AG04449 (cell line): ENCODE measurements at regions of chr9 and their contacts with region 1.

Region 1: DNA sequence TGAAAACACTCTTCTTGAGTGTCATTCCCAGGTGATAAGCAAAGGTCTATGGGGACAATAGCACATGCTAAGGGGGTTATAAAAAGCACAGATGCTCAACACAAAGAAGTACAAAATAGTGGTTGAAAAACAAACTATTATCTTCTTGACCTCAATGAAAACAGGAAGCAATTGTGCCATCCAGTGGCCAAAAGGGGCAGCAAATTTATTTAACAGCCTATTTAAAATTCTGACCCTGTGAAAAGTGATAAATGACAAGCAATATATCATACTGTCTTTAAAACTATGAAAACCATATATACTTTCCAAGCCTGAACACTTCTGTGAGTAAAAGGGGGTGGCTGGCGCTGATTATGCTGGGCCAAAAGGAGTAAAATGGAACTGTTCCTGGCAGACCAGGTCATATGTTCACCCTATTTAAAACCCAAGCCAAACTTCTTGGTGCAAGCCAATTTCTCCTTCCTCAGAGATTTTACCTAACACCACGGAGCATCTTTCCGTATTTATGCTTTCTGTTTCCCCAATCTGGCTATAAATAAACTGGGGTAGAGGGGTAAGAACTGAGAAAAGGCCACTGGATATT is 29.7 kb downstream of the TEX10 start:
- DNase-seq: no peak
- H3K4me3 ChIP-seq: no peak overlapping the region
- CTCF ChIP-seq: peak; percentile 39

Region 2: DNA sequence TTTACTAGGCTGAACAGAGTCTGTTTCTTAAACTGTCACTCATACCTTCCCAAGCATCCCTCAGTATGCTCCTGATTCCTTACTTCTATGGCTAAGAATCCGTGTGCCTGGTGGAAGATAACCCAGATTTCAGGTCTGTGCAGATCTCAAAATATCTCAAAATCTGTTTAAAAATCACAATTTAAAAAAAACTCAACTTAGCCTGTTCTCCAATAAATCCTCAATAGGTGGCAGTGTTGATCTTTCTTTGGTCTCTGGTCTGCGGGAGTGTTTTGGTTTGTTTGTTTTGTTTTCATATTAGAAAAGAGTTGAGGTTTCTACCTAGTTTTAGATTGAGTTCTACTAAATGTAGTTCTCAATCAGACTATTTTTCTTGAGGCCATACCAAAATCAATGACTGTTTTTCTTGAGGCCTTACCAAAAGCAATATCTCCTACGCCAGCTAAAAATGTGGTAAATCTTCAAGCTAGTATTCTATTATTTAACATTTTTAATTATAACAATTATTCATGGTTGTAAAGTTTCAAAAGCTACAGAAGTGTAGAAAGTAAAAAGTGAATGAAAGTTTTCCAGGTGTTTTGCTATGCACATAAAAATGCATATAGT is 1160.2 kb before region 1 on chr9:
- CTCF ChIA-PET with region 1: interaction called, 24 read pairs
- POLR2A ChIA-PET with region 1: no interaction called
- DNase-seq: no peak
- H3K4me3 ChIP-seq: no peak overlapping the region
- CTCF ChIP-seq: peak; percentile 44

Region 3: GRCh38 chr9:100295240-100295639 is 27.8 kb before region 1 on chr9:
- CTCF ChIA-PET with region 1: interaction called, 13 read pairs
- POLR2A ChIA-PET with region 1: no interaction called
- DNase-seq: no peak
- H3K4me3 ChIP-seq: no peak overlapping the region
- CTCF ChIP-seq: no peak

Region 4: GRCh38 chr9:100346836-100347235 is 23.8 kb after region 1 on chr9:
- CTCF ChIA-PET with region 1: interaction called, 59 read pairs
- POLR2A ChIA-PET with region 1: no interaction called
- DNase-seq: no peak
- H3K4me3 ChIP-seq: no peak overlapping the region
- CTCF ChIP-seq: no peak

Region 5: GRCh38 chr9:100437860-100438805 is 115.1 kb after region 1 on chr9:
- CTCF ChIA-PET with region 1: interaction called, 19 read pairs
- POLR2A ChIA-PET with region 1: no interaction called
- DNase-seq: no peak
- H3K4me3 ChIP-seq: no peak overlapping the region
- CTCF ChIP-seq: peak; percentile 85

Region 6: GRCh38 chr9:101848485-101848919 is 1525.5 kb after region 1 on chr9:
- CTCF ChIA-PET with region 1: no interaction called
- POLR2A ChIA-PET with region 1: no interaction called
- DNase-seq: no peak
- H3K4me3 ChIP-seq: no peak overlapping the region
- CTCF ChIP-seq: no peak